Activated naive CD4-positive, alpha-beta T cell treated with anti-CD3 and anti-CD28 coated beads for 36 hours (primary cell): ENCODE measurements at regions of chr1 and their contacts with region 1.

Region 1: DNA sequence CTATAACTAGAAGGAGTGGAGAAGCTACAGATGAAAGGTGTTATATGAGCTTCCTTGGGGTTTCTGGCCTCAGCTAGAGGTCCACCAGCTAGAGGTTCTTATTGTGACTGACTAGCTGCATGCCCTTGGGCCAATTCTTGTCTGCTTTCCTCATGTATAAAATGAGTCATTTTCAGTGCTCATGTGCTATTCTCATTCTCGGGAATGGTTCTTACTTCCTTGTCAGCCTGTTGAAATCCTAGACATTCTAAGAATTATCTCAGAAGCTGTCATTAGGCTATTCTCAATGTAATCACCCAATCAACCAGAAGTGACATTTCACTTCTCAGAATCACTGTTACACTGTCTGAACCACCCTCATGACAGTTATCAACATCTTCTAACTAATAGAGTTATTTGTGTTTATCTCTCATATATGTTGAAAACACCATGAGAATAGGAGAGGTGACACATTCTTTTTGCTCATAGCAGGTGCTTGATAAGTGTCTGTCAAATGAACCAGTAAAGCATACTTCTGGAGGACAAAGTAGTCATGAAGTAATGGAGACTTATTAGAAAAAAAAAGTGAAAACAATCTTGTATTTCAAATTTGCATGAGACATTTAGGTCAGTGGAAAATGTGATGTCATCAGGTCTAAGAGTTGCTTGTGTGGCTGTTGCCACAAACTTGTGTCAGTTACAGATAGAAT is 122.8 kb upstream of the IVNS1ABP start:
- DNase-seq: peak; percentile 31
- H3K4me3 Mint-ChIP-seq: no peak overlapping the region
- H3K27ac Mint-ChIP-seq: no peak overlapping the region
- H3K4me1 Mint-ChIP-seq: peaks cover 2% of the 10 kb centered on the region
- H3K27me3 Mint-ChIP-seq: no peaks in the 10 kb centered on the region

Region 2: DNA sequence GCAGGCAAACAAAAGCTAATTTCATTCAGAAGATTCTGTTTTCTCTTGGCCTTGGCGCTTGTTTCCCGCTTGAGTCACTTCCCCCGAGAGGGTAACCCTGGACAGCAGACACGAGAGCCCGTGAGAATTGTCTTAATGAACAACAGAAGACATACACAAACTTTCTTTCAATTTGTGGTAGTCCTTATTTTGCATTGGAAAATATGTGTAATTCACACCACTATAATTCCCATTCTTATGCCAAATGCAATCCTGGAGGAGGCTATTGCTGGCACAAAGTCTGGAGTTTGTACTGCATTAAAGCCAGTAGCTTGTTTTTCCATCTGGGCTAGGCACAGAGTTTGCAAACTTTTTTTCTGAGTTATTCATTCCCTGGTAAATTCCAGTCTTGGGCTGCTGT is 13.0 kb before region 1 on chr1:
- CTCF ChIA-PET with region 1: no interaction called
- intact Hi-C with region 1: no loop called
- DNase-seq: no peak
- H3K4me3 Mint-ChIP-seq: no peak overlapping the region
- H3K27ac Mint-ChIP-seq: no peak overlapping the region
- H3K4me1 Mint-ChIP-seq: no peaks in the 10 kb centered on the region
- H3K27me3 Mint-ChIP-seq: no peaks in the 10 kb centered on the region

Region 3: DNA sequence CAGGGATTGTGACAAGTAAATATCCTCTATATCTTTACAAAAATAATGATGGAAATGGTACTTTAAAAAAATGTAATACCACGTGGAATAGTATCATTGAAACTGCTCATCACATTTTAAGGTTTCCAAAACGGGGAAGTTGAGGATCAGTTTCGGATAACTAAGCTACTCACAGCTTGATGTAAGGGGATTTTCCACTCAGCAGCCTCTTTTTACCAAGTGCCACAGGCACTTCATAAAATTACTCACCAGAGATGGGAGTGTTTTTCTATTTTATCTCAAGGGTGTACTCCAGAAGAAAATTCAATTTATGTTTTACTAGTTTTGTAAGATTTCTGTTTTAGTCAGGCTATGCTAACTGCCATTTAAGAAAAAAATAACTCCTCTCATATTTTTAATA is 843.5 kb after region 1 on chr1:
- CTCF ChIA-PET with region 1: no interaction called
- intact Hi-C with region 1: loop called (anchors 5 kb)
- DNase-seq: peak; percentile 46
- H3K4me3 Mint-ChIP-seq: peak overlapping the region; percentile 48
- H3K27ac Mint-ChIP-seq: peak overlapping the region; percentile 99
- H3K4me1 Mint-ChIP-seq: peaks cover 74% of the 10 kb centered on the region
- H3K27me3 Mint-ChIP-seq: no peaks in the 10 kb centered on the region